ENCODE measurements at regions of chr7 and their contacts with region 1.

Region 1: DNA sequence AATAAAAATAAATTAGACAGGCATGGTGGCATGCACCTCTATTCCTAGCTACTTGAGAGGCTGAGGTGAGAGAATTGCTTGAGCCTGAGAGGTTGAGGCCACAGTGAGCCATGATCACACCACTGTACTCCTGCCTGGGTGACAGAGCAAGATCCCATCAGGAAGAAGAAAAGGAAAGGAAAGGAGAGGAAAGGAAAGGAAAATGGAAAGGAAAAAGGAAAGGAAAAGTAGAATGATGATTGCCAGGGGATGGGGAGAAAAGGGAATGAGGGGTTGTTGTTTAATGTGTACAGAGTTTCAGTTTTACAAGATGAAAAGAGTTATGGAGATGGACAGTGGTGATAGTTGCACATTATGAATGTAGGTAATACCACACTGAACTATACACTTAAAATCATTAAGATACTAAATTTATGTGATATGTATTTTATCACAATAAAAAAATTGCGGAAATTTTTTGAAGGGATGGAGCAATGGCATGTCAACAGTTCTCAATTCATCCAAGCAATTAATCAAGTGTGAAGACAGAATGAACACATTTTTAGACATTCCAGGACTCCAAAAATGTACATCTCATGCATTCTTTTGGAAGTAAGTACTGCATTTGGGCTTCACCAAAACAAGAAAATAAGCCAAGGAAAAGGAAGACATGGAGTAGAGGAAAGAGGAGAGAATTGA is 44.3 kb downstream of the IL6 start:
- DNase-seq: no peak
- H3K4me3 ChIP-seq: no peak overlapping the region
- H3K27ac ChIP-seq: no peak overlapping the region
- H3K4me1 ChIP-seq: no peaks in the 10 kb centered on the region
- H3K27me3 ChIP-seq: no peaks in the 10 kb centered on the region
- CTCF ChIP-seq: no peak
- POLR2A ChIP-seq: no peak

Region 2: GRCh38 chr7:22559829-22560489 is 211.4 kb before region 1 on chr7:
- intact Hi-C with region 1: loop called (anchors 5 kb)
- DNase-seq: peak; percentile 55 to 56
- H3K4me3 ChIP-seq: no peak overlapping the region
- H3K27ac ChIP-seq: no peak overlapping the region
- H3K4me1 ChIP-seq: peaks cover 0 to 7% of the 10 kb centered on the region in 2 donors
- H3K27me3 ChIP-seq: no peaks in the 10 kb centered on the region
- CTCF ChIP-seq: peak; percentile 89 to 96 (median 90)
- POLR2A ChIP-seq: no peak

Region 3: DNA sequence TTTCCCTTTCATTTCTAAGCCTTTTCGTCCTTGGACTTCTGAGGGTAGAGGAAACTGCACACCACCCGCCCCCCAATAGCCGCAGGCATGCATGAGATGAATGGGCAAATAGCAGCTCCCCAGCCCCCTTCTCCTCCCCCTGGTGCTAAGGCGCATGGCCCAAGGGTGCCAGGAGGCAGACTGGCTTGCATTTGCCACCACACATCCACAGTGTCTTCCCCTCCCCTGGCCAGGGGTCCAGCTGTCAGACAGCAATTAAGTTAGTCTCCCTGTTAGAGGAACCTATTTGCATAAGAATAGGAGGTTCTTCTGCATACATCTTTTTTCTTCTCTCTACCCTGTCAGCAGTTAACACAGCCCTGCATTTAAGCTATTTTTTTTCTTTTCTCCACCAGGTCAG is 31.1 kb after region 1 on chr7:
- intact Hi-C with region 1: no loop called
- DNase-seq: no peak
- H3K4me3 ChIP-seq: no peak overlapping the region
- H3K27ac ChIP-seq: no peak overlapping the region
- H3K4me1 ChIP-seq: no peaks in the 10 kb centered on the region
- H3K27me3 ChIP-seq: no peaks in the 10 kb centered on the region
- CTCF ChIP-seq: no peak
- POLR2A ChIP-seq: no peak

Measured in breast epithelium (tissue), 4 donors.